Right lobe of liver (tissue), 6 donors: ENCODE measurements at regions of chr9 and their contacts with region 1.

Region 1: GRCh38 chr9:792282-793260 is 48.9 kb upstream of the DMRT1 start:
- DNase-seq: no peak
- ATAC-seq: peak; percentile 63 to 91 (median 82)
- H3K4me3 ChIP-seq: no peak overlapping the region
- H3K27ac ChIP-seq: no peak overlapping the region
- H3K4me1 ChIP-seq: peaks cover 0 to 4% (median 0%) of the 10 kb centered on the region in 4 donors
- H3K27me3 ChIP-seq: no peaks in the 10 kb centered on the region
- CTCF ChIP-seq: no peak
- POLR2A ChIP-seq: no peak

Region 2: GRCh38 chr9:385818-386398 is 406.7 kb before region 1 on chr9:
- intact Hi-C with region 1: loop called in 1 of 2 experiments (anchors 10 kb)
- DNase-seq: no peak
- ATAC-seq: peak; percentile 87 to 93 (median 92)
- H3K4me3 ChIP-seq: no peak overlapping the region
- H3K27ac ChIP-seq: no peak overlapping the region
- H3K4me1 ChIP-seq: no peaks in the 10 kb centered on the region
- H3K27me3 ChIP-seq: peaks cover 0 to 7% of the 10 kb centered on the region in 2 donors
- CTCF ChIP-seq: peak; percentile 73 to 79 (median 76)
- POLR2A ChIP-seq: no peak